Ovary (tissue), 10 donors: ENCODE measurements at regions of chr1 and their contacts with region 1.

Region 1: GRCh38 chr1:22089787-22090186 is 37.3 kb downstream of the CDC42 start:
- DNase-seq: no peak
- H3K4me3 ChIP-seq: no peak overlapping the region
- H3K27ac ChIP-seq: no peak overlapping the region
- H3K4me1 ChIP-seq: peaks cover 8% of the 10 kb centered on the region
- H3K27me3 ChIP-seq: no peaks in the 10 kb centered on the region
- CTCF ChIP-seq: no peak
- EP300 ChIP-seq: no peak
- POLR2A ChIP-seq: no peak

Region 2: GRCh38 chr1:22077728-22078127 is 12.1 kb before region 1 on chr1:
- intact Hi-C with region 1: loop called in 1 of 4 experiments (anchors 2 kb)
- DNase-seq: no peak
- H3K4me3 ChIP-seq: no peak overlapping the region
- H3K27ac ChIP-seq: no peak overlapping the region
- H3K4me1 ChIP-seq: peaks cover 12% of the 10 kb centered on the region
- H3K27me3 ChIP-seq: no peaks in the 10 kb centered on the region
- CTCF ChIP-seq: no peak
- EP300 ChIP-seq: no peak
- POLR2A ChIP-seq: no peak

Region 3: DNA sequence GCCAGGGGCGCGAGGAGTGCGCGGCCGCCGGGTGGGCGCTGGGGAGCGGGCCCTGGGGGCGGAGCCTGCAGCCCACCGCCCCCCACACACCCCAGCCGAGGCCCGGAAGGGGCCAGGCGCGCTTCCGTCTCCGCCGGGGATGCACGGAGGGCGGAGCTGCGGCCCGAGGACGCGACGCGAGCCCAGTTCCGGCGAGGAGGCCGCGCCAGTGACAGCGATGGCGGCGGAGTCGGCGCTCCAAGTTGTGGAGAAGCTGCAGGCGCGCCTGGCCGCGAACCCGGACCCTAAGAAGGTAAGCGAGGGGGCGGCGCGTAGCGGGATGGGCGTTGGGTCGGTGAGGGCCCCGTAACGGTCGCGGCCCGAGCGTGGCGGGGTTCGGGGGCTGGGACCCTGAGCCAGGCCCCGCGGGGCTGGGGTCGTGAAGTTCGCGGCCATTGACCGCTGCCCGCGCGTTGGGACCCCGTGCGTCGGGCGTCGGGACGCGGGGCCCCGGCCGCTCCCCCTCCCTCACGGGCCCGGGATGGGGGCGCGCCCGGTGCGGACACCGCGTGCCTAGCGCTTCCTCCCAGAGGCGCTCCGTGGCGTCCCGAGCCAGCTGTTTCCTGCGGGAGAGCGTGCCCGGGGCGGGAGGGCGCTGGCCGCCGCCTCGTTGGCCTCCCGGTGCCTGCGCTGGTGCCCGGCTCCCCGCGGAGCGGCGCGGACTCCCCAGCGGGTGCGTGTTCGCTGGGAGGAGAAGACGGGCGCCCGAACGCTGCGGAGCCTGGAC is 1653.7 kb after region 1 on chr1 and contains the start of gene ELOA:
- intact Hi-C with region 1: loop called in 1 of 4 experiments (anchors 5 kb)
- DNase-seq: peak; percentile 59 to 83 (median 67)
- H3K4me3 ChIP-seq: peak within 1 kb of the TSS; percentile 99
- H3K27ac ChIP-seq: peak within 1 kb of the TSS; percentile 49 to 87
- H3K4me1 ChIP-seq: peaks cover 11% of the 10 kb centered on the region
- H3K27me3 ChIP-seq: no peaks in the 10 kb centered on the region
- CTCF ChIP-seq: peak in 1 of 3 donors; percentile 23
- EP300 ChIP-seq: no peak
- POLR2A ChIP-seq: peak; percentile 32
- total RNA-seq, gene ELOA: 17.8 to 38.0 (median 27.3) TPM